Right ventricle myocardium inferior (tissue), 1 donor: ENCODE measurements at regions of chr20 and their contacts with region 1.

Region 1: GRCh38 chr20:60057123-60057801 is 99.0 kb downstream of the CDH26 start:
- DNase-seq: no peak
- ATAC-seq: peak; percentile 55

Region 2: GRCh38 chr20:59948828-59949720 is 108.2 kb before region 1 on chr20:
- intact Hi-C with region 1: loop called (anchors 5 kb)
- DNase-seq: no peak
- ATAC-seq: no peak

Region 3: GRCh38 chr20:60262967-60263603 is 205.8 kb after region 1 on chr20:
- intact Hi-C with region 1: loop called (anchors 5 kb)
- DNase-seq: no peak
- ATAC-seq: no peak

Region 4: DNA sequence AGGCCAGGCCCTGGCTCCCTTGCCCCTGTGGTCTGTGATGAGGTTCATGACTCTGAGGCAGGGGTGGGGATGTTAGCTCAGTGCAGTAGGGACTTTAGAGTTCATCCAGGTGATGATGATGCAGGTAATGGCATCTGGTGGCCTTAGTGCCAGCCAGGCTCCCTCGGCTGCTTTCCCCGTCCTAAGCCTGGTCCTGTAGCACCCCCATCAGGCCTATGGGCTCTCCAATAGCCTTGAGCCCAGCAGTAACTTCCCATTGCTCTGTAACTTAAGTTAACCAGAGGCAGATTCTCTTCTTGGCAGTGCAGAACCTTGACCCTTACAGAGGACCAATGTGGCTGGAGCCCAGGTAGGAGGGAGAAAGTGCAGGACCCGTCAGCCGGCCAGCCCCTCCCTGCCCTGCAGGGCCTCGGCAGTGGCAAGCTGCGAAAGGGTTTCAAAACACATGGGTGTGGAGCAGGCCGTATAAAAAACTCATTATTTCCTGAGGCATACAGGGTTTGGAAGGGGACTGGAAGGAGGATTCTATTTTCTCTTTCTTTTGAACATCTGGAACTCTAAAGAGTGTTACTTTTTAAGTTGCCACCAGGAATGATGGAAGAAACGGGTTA is 307.9 kb after region 1 on chr20:
- intact Hi-C with region 1: no loop called
- DNase-seq: no peak
- ATAC-seq: no peak

Region 5: GRCh38 chr20:61120595-61121515 is 1063.6 kb after region 1 on chr20:
- intact Hi-C with region 1: loop called (anchors 5 kb)
- DNase-seq: no peak
- ATAC-seq: peak; percentile 67

Region 6: DNA sequence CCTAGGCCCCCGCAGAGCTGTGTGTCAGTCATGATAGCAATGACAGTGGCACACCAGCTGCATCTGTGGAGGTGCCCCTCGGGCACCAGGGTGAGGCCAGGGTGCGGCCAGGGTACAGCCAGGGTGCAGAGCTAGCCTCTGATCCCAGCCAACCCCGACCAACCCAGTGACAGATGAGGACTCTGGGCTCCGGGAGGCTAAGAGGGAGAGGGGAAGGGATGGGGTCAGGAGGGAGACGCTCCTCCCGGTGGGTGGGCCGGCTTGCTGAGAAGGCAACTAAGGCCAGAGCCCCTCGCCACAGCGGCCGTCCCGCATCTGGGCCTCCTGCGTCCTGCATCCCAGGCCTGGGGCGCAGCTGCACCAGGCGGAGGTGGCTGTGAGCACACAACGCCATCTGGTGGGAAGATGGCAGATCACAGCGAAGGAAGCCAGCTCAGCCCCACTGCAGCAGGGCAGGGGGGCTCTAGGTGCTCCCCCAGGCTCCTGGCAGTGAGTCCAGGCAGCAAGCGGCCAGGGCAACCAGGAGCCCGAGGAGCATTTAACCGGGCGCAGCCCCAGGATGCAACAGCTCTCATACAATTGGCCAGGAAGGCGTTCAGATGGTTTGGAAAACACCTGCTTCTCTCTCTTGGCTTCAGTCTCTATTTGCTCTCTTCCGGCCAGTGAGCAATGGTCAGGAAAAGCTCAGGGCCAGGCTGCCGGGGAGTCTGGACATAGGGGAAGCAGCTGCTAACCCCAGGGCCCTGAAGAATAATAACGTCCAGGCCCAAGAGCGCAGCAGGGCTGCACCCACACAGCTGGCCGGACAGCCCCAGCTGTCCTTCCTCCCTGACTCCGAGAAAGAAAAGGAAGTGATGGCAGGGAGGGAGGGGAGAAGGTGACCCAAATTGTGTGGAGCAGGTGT is 1839.0 kb after region 1 on chr20:
- intact Hi-C with region 1: loop called (anchors 10 kb)
- DNase-seq: peak; percentile 65
- ATAC-seq: no peak